SK-N-SH (cell line): ENCODE measurements at regions of chr22 and their contacts with region 1.

Region 1: GRCh38 chr22:31211862-31212730 is at the start of gene LIMK2:
- DNase-seq: peak; percentile 97
- H3K4me3 ChIP-seq: peak within 1 kb of the TSS; percentile 58 to 84
- H3K27ac ChIP-seq: peak within 1 kb of the TSS; percentile 24 to 48; a peak in 2 of 4 replicates
- H3K4me1 ChIP-seq: peaks cover 0 to 11% of the 10 kb centered on the region in 2 experiments; a peak in 2 of 4 replicates
- H3K27me3 ChIP-seq: no peaks in the 10 kb centered on the region
- CTCF ChIP-seq: peak; percentile 91
- EP300 ChIP-seq: peak in 1 of 2 experiments; percentile 39; a peak in 1 of 4 replicates
- RAD21 ChIP-seq: peak; percentile 74
- polyA plus RNA-seq, gene LIMK2: 9.8 and 10.7 TPM in 2 replicates

Region 2: DNA sequence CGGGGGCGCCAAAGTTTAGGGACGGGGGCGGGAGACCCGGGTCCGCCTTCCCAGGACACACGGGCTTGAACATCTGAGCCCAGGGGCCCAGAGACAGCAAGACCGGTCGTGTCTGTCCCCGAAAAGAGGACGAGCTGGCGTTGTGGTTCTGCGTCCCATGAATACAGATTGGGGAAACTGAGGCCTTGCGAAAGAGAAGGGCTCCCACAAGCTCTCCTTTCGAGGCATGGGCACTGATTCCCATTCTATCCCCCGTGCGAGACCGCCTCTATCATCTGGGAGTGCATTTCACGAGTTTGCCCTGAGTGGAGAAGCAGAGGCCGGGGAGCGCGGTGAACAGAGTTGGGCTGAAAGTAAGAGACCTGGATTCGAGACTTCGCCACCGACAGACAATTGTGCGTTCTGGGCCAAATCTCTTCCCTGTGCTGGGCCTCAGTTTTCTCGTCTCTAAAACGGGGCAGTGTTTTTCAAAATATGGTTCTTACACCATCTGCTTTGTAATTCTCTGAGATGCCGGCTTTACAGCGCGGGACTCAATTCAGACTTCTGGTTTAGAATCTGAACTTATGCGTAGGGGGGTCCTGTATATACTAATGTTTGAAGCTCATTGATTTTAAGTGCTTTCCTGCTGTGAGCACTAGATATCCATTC is 51.6 kb before region 1 on chr22:
- CTCF ChIA-PET with region 1: interaction called, 13 read pairs
- POLR2A ChIA-PET with region 1: no interaction called
- DNase-seq: no peak
- H3K4me3 ChIP-seq: peak overlapping the region; percentile 76 to 99
- H3K27ac ChIP-seq: peak overlapping the region; percentile 8 to 69; a peak in 3 of 4 replicates
- H3K4me1 ChIP-seq: peaks cover 6 to 15% of the 10 kb centered on the region in 2 experiments
- H3K27me3 ChIP-seq: no peaks in the 10 kb centered on the region
- CTCF ChIP-seq: no peak
- EP300 ChIP-seq: no peak
- RAD21 ChIP-seq: no peak

Region 3: GRCh38 chr22:31230871-31231621 is 18.9 kb after region 1 on chr22:
- CTCF ChIA-PET with region 1: interaction called, 105 read pairs
- POLR2A ChIA-PET with region 1: interaction called, 5 read pairs
- DNase-seq: peak; percentile 37
- H3K4me3 ChIP-seq: no peak overlapping the region
- H3K27ac ChIP-seq: peak overlapping the region in 1 of 2 experiments; percentile 57; a peak in 2 of 4 replicates
- H3K4me1 ChIP-seq: peaks cover 16 to 22% of the 10 kb centered on the region in 2 experiments; a peak in 2 of 4 replicates
- H3K27me3 ChIP-seq: no peaks in the 10 kb centered on the region
- CTCF ChIP-seq: peak; percentile 75
- EP300 ChIP-seq: no peak
- RAD21 ChIP-seq: peak; percentile 87

Region 4: DNA sequence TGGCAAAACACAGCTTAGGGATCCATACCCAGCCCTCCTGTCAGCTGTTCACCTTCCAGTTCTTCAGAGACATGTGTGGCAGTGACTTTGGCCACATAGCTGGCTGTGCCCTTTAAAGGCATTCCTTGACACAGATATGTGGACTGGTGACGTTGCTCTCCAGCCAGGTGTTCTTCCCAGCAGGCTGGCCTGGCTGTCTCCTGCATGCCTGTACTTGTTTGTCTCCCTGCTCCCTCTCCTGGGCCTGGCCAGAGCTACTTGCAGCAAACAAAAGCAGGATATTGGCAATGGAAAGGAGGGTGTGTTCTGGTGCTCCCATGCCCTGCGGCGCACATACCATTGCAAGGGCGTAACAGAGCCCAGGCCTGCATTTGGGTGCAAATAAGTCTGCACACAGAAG is 41.9 kb after region 1 on chr22:
- CTCF ChIA-PET with region 1: interaction called, 50 read pairs
- POLR2A ChIA-PET with region 1: no interaction called
- DNase-seq: no peak
- H3K4me3 ChIP-seq: no peak overlapping the region
- H3K27ac ChIP-seq: peak overlapping the region in 1 of 2 experiments; percentile 26; a peak in 1 of 4 replicates
- H3K4me1 ChIP-seq: peaks cover 0 to 25% of the 10 kb centered on the region in 2 experiments; a peak in 2 of 4 replicates
- H3K27me3 ChIP-seq: no peaks in the 10 kb centered on the region
- CTCF ChIP-seq: no peak
- EP300 ChIP-seq: no peak
- RAD21 ChIP-seq: no peak

Region 5: GRCh38 chr22:31278622-31279326 is 66.7 kb after region 1 on chr22:
- CTCF ChIA-PET with region 1: interaction called, 151 read pairs
- POLR2A ChIA-PET with region 1: interaction called, 5 read pairs
- DNase-seq: no peak
- H3K4me3 ChIP-seq: no peak overlapping the region
- H3K27ac ChIP-seq: no peak overlapping the region
- H3K4me1 ChIP-seq: no peaks in the 10 kb centered on the region; a peak in 1 of 4 replicates
- H3K27me3 ChIP-seq: no peaks in the 10 kb centered on the region
- CTCF ChIP-seq: no peak
- EP300 ChIP-seq: no peak
- RAD21 ChIP-seq: no peak

Region 6: GRCh38 chr22:31313366-31314147 is 101.5 kb after region 1 on chr22:
- CTCF ChIA-PET with region 1: interaction called, 22 read pairs
- POLR2A ChIA-PET with region 1: no interaction called
- DNase-seq: peak; percentile 72
- H3K4me3 ChIP-seq: no peak overlapping the region
- H3K27ac ChIP-seq: 0 out of 4 replicates have a peak overlapping the region, but pooled peaks of 1 of the 2 experiments have one; percentile 8
- H3K4me1 ChIP-seq: peaks cover 0 to 2% of the 10 kb centered on the region in 2 experiments; a peak in 1 of 4 replicates
- H3K27me3 ChIP-seq: no peaks in the 10 kb centered on the region
- CTCF ChIP-seq: peak; percentile 93
- EP300 ChIP-seq: no peak
- RAD21 ChIP-seq: peak; percentile 66

Region 7: DNA sequence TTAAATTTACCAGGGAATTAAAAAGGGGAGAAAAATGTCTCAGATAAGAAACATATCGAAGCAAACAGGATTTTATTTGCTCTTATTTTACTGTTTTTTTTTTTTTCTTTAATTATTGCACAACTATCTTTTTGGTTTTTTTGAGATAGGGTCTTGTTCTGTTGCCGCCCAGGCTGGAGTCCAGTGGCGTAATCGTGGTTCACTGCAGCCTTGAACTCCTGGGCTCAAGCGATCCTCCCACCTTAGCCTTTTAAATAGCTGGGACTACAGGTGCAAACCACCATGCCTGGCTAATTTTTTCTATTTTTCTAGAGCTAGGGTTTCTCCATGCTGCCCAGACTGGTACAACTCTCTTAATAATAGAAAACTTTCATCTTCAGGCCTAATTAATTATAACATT is 219.9 kb after region 1 on chr22:
- CTCF ChIA-PET with region 1: no interaction called
- POLR2A ChIA-PET with region 1: no interaction called
- DNase-seq: no peak
- H3K4me3 ChIP-seq: no peak overlapping the region
- H3K27ac ChIP-seq: no peak overlapping the region
- H3K4me1 ChIP-seq: no peaks in the 10 kb centered on the region
- H3K27me3 ChIP-seq: no peaks in the 10 kb centered on the region
- CTCF ChIP-seq: no peak
- EP300 ChIP-seq: no peak
- RAD21 ChIP-seq: no peak

Region 8: GRCh38 chr22:31451709-31452571 is 239.8 kb after region 1 on chr22:
- CTCF ChIA-PET with region 1: no interaction called
- POLR2A ChIA-PET with region 1: no interaction called
- DNase-seq: peak; percentile 27
- H3K4me3 ChIP-seq: no peak overlapping the region
- H3K27ac ChIP-seq: peak overlapping the region in 1 of 2 experiments; percentile 7; a peak in 1 of 4 replicates
- H3K4me1 ChIP-seq: no peaks in the 10 kb centered on the region
- H3K27me3 ChIP-seq: no peaks in the 10 kb centered on the region
- CTCF ChIP-seq: peak; percentile 71
- EP300 ChIP-seq: no peak
- RAD21 ChIP-seq: peak; percentile 35